AG04449 (cell line): ENCODE measurements at regions of chr1 and their contacts with region 1.

Region 1: DNA sequence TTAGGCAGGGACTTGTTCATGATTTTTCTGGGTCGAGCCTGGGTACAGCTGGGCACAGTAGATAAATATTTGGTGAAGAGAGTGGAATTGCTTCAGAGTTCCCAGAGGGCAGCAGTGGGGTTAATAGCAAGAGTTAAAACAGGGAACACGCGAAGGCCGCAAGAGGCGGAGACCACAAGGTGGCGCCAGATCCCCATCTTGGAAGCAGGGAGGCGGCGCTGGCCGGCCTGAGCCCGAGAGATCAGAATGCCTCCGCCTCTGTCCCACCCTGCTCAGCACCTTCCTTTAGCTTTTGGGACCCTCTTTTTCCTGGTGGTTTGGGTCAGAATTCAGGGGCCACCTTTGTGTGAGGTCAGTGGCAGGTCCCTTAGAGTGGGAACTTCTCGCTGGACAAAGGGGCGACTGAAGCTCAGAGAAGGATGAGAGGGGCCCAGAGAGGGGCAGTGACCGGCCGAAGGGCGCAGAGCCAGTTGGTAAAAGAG is 6.5 kb upstream of the PADI2 start:
- DNase-seq: no peak
- H3K4me3 ChIP-seq: no peak overlapping the region
- CTCF ChIP-seq: peak; percentile 97

Region 2: DNA sequence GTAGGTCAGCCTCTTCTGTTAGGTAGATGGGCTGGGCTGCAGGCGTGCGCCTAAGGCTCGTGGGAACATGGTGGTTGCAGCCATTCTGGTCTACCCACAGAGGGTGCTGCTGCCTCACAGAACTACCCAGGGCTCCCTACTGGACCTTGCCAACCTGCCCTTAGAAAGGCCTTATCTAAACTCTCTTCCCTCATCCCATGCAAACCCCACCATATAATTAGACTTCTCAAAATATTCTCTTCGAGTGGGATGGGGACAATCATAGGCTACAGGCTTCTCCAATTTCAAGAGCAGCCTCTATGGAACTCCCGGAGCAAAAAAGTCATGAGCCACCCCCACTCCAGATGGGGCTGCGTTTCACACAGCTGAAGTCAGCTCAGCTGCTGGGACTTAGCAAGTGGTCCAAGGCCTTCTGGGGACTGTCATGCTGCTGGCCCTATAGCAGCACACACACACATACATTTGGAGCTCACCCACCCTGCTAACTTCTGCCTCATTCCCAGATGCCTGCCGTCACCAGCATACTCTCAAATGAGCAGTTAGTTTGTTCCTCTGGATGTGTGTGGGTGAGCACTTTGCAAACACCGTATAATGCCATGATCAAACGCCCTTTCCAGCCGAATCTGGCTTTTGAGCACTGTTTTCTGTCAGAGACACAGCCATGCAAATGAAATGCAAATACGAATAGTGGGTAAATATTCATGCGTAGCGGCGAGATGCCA is 65.9 kb before region 1 on chr1:
- CTCF ChIA-PET with region 1: interaction called, 38 read pairs
- POLR2A ChIA-PET with region 1: no interaction called
- DNase-seq: no peak
- H3K4me3 ChIP-seq: no peak overlapping the region
- CTCF ChIP-seq: peak; percentile 93

Region 3: DNA sequence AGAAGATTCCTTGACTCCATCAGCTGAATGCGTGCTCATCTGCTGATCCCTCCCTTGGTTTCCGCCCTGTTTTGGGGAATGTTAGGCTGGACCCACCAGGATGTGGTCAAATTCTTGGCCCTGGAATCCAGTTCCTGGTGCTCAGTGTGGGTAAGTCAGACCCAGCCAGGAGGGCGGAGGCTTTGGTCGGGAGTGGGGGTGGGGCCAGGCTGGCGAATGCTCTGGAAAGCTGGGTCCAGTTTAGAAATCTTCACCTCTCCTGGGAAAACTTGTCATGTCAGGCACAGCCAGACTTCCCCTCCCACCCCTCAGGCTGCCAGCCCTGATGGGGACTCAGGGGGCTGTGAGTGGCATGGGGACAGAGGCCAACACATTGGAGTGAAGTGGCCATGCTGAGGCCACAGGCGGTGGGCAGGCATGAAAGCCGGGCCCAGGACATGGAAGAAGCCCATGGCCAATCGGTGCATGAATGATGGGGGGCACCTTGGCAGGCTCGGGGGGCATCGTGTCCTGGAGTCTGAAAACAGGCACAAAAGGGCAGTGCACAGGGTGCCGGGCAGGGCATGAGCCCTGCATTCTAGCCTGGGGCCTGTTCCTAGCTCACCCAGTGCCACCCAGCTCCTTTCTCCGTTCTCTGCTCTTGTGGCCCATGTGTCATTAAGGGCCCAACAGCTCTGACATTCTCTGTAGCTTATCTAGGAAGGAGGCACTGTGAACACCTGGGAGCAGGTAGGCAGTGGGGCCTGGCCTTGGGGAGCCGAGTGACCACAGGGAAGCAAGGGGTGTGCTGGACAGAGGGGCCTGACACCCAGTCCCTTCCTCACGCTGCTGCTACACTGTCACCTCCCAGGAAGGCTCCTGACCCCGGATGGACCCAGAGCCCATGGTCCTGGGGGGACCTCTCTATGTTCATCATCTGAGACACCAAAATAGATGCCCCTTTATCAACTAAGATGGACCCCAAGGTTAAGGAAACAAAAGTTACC is 64.5 kb after region 1 on chr1:
- CTCF ChIA-PET with region 1: interaction called, 5 read pairs
- POLR2A ChIA-PET with region 1: interaction called, 10 read pairs
- DNase-seq: peak; percentile 97
- H3K4me3 ChIP-seq: no peak overlapping the region
- CTCF ChIP-seq: no peak

Region 4: GRCh38 chr1:17250601-17251000 is 124.8 kb after region 1 on chr1:
- CTCF ChIA-PET with region 1: interaction called, 29 read pairs
- POLR2A ChIA-PET with region 1: interaction called, 4 read pairs
- DNase-seq: no peak
- H3K4me3 ChIP-seq: no peak overlapping the region
- CTCF ChIP-seq: no peak

Region 5: GRCh38 chr1:17274186-17275170 is 148.7 kb after region 1 on chr1:
- CTCF ChIA-PET with region 1: interaction called, 40 read pairs
- POLR2A ChIA-PET with region 1: no interaction called
- DNase-seq: no peak
- H3K4me3 ChIP-seq: no peak overlapping the region
- CTCF ChIP-seq: peak; percentile 81

Region 6: GRCh38 chr1:17314491-17315022 is 188.8 kb after region 1 on chr1:
- CTCF ChIA-PET with region 1: no interaction called
- POLR2A ChIA-PET with region 1: no interaction called
- DNase-seq: no peak
- H3K4me3 ChIP-seq: no peak overlapping the region
- CTCF ChIP-seq: no peak

Region 7: DNA sequence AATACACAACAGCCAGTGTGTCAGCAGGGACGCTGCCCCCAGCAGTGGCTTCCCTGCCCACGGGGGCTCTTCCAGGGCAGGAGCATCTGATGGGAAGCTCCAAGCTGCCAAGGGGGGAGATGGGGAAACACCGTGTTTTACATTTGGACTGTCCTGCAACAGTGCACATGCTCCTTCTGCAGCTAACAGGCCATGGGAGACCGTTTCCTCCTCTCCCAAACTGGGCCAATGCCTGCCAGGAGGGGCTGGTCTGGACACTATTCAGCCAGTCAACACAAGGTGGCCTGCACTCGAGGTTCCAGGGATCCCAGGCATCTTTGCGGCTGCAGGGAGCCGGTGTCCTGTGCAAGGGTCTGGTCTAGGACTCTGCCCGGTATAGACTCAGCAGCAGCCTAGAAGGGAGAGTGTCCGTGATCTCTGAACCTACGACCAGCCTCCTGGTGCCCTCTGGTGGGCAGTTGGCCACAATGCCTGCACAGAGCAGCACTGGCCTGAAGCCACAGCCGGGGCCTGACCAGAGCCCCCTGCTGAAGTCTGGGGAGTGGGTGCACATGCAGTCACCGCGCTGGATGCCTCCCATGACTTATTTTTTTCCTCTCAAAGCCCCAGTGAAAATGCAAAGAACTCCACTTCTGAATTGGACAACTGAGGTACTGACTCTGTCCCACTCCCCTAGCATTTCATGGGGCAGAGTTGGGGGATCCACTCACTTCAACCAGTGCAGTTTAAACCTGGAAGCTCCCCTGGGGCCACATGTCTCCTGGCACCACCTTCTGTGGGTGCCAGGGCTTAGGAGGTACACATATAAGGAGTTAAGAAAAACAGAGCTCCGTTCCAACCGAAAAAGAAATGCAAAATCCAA is 280.3 kb after region 1 on chr1:
- CTCF ChIA-PET with region 1: interaction called, 95 read pairs
- POLR2A ChIA-PET with region 1: no interaction called
- DNase-seq: no peak
- H3K4me3 ChIP-seq: no peak overlapping the region
- CTCF ChIP-seq: peak; percentile 88